ENCODE measurements at regions of chr21 and their contacts with region 1.

Region 1: DNA sequence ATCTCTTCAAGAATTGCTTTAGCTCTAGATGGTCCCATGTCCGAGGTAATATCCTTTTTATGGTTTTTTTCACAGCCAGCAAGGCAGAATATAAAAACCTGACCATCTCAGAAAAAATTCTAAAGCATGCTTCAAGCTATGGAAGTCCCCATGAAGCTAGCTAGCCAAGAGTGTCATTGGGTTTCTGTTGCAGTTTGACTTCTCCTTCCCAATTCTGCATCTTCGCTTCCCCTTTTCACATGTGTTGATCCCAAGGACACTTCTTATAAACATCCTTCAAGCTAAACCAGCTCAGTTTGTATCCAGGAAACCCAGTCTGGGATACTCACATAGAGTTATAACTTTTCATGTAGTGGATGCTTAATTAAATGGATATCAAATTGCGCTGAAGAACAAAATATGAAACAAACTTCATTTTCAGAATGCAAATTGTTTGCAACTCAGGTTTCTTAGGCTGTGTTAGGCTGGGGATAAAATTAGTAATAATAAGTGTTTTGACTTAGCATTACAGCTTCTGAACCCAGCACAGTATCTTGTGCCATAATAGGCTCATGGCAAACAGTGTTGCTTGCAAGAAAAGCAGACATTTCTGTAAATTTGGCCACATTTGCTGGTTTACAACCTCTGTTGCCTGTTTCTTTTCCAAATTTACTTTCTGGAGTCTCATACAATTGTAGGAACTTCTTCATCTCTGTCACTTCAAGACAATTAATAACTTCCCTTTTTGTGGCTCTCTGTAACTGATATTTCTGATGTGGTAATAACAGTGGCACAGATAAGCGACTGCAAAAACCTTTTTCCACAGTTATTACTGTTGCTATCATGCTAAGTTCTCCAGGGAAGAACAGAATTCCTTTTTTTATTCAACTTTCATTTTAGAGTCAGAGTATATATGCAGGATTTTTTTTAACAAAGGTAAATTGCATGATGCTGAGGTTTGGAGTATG is 53.2 kb downstream of the NCAM2 start:
- DNase-seq: no peak
- ATAC-seq: no peak
- H3K4me3 ChIP-seq: no peak overlapping the region
- H3K4me3 Mint-ChIP-seq: no peak overlapping the region
- H3K27ac ChIP-seq: no peak overlapping the region
- H3K27ac Mint-ChIP-seq: no peak overlapping the region
- H3K4me1 ChIP-seq: no peaks in the 10 kb centered on the region
- H3K4me1 Mint-ChIP-seq: peaks cover 0 to 1% (median 0%) of the 10 kb centered on the region in 7 donors
- H3K27me3 ChIP-seq: no peaks in the 10 kb centered on the region
- H3K27me3 Mint-ChIP-seq: no peaks in the 10 kb centered on the region

Region 2: GRCh38 chr21:21039624-21040170 is 11.7 kb before region 1 on chr21:
- CTCF ChIA-PET with region 1: no interaction called
- POLR2A ChIA-PET with region 1: no interaction called
- intact Hi-C with region 1: no loop called
- DNase-seq: no peak
- ATAC-seq: no peak
- H3K4me3 ChIP-seq: no peak overlapping the region
- H3K4me3 Mint-ChIP-seq: no peak overlapping the region
- H3K27ac ChIP-seq: no peak overlapping the region
- H3K27ac Mint-ChIP-seq: no peak overlapping the region
- H3K4me1 ChIP-seq: no peaks in the 10 kb centered on the region
- H3K4me1 Mint-ChIP-seq: no peaks in the 10 kb centered on the region
- H3K27me3 ChIP-seq: no peaks in the 10 kb centered on the region
- H3K27me3 Mint-ChIP-seq: no peaks in the 10 kb centered on the region

Region 3: GRCh38 chr21:21122680-21123079 is 71.3 kb after region 1 on chr21:
- CTCF ChIA-PET with region 1: no interaction called
- POLR2A ChIA-PET with region 1: no interaction called
- intact Hi-C with region 1: loop called in 1 of 2 experiments (anchors 2 kb)
- DNase-seq: no peak
- ATAC-seq: no peak
- H3K4me3 ChIP-seq: no peak overlapping the region
- H3K4me3 Mint-ChIP-seq: no peak overlapping the region
- H3K27ac ChIP-seq: no peak overlapping the region
- H3K27ac Mint-ChIP-seq: no peak overlapping the region
- H3K4me1 ChIP-seq: no peaks in the 10 kb centered on the region
- H3K4me1 Mint-ChIP-seq: no peaks in the 10 kb centered on the region
- H3K27me3 ChIP-seq: no peaks in the 10 kb centered on the region
- H3K27me3 Mint-ChIP-seq: no peaks in the 10 kb centered on the region